ENCODE measurements at regions of chr12 and their contacts with region 1.

Region 1: DNA sequence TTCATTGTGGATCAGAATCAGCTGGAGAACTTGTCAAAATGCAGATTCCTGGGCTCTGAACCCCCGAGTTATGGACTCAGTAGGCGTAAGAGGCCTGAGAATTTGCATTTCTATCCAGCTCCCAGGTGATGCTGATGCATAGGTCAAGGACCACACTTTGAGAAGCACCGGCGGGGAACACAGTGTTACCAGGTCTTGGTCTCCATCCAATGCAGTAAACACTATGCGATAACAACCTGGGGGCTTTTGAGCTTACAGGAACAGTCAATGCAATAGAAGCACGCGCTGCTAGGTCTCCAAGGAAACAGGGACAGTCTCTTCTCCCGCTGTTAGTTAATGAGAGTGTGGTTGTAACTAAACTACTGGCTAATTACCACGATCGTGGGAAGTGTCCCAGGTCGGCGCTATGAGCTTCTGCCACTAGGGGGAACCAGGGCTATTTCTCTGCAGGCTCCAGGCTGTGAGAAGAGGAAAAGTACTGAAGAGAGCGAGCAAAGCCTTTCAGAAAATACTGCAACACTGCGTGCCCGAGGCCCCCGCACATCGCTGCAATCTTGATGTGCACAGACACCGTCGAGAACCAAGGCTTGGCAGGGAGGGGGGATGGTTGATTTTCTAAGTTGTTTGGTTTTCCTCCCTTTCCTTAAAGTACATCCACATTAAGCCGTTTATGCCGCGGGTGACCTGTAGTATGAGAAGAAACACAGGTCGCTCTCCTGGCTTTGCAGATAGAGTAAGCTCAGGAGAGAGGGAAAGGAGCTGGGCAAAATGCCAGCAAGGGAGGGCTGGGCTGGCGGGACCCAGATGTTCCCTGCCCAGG is 52.0 kb upstream of the KCNA1 start:
- DNase-seq: peak; percentile 43
- ATAC-seq: peak; percentile 88
- H3K4me3 ChIP-seq: no peak overlapping the region
- H3K27ac ChIP-seq: no peak overlapping the region
- H3K4me1 ChIP-seq: no peaks in the 10 kb centered on the region
- H3K27me3 ChIP-seq: peaks cover 2% of the 10 kb centered on the region; the same call in 1 of the 2 replicates
- CTCF ChIP-seq: peak; percentile 87

Region 2: DNA sequence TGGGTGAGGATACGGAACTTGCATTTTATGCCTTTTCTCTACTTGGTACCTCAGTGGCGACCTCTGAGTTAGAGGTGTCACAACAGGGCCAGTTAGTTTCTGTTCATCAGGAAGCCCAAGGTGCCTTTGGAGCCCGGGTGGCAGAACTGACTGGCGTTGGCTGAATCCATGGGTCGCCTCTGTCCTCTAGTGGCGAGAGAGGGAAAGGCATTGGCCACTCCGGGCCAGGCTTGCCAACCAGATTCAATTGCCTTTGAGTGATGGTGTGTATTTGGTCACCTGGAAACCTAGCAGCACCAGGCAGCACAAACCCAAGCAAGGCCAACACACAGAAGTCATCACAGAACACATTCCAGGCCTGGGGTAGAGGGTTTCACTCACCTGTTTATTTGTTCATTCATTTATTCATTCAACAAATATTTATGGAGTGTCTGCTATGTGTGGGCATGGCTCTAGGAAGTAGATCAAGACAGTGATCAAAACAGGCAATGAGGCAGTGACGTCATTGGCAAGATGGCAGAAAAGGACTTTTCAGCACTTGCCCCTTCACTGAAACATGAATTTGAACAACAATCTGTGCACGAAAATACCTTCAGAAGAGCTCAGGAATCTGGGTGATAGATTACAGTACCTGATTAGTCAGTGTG is 145.5 kb after region 1 on chr12:
- CTCF ChIA-PET with region 1: interaction called, 7 read pairs
- POLR2A ChIA-PET with region 1: no interaction called
- in situ Hi-C with region 1: no loop called
- intact Hi-C with region 1: loop called (anchors 1 kb)
- DNase-seq: peak; percentile 69
- ATAC-seq: peak; percentile 91
- H3K4me3 ChIP-seq: no peak overlapping the region
- H3K27ac ChIP-seq: no peak overlapping the region
- H3K4me1 ChIP-seq: no peaks in the 10 kb centered on the region
- H3K27me3 ChIP-seq: no peaks in the 10 kb centered on the region
- CTCF ChIP-seq: peak; percentile 93

Region 3: GRCh38 chr12:5018677-5019076 is 161.0 kb after region 1 on chr12:
- CTCF ChIA-PET with region 1: no interaction called
- POLR2A ChIA-PET with region 1: no interaction called
- in situ Hi-C with region 1: no loop called
- intact Hi-C with region 1: no loop called
- DNase-seq: no peak
- ATAC-seq: no peak
- H3K4me3 ChIP-seq: no peak overlapping the region
- H3K27ac ChIP-seq: no peak overlapping the region
- H3K4me1 ChIP-seq: no peaks in the 10 kb centered on the region
- H3K27me3 ChIP-seq: no peaks in the 10 kb centered on the region
- CTCF ChIP-seq: no peak

Region 4: DNA sequence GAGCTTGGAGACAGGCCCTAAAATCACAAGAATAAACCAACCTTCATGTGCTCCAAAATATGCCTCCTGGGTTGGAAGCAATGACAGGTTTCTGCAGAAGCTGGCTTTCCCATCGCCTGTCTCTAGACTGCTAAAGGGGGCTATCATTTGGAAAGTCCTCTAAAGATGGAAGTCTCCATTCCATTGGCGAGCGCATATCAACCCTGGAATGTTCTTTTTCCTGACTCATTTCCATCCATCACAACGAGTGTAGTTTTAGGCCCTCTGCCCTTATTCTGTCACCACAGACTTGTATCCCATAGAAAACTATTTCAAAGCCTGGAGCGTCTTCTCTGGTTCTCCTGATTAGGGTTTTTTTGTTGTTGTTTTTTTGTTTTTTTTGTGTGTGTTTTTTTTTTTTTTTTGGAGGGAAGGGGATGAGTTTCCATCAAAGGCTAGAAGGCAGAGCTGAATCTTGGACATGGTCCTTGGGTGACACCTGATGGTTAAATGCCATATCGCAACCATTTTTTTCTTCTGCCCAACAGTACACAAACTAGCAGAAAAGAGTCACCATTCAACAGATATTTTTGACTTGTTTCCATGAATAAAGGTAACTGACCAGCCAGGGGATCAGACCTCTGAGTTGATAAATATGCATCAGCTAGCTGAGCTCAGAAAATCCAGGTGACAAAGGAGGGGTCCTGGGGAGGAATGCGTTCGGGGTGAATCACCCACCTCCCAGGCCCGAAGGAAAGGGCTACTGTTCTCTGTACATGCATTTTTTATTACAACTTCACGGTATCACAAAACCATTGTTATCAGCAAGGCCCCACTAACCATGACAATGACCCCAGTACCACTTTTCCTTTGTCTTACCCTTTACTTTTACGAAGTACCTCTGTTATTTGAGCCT is 226.5 kb after region 1 on chr12:
- CTCF ChIA-PET with region 1: interaction called, 4 read pairs
- POLR2A ChIA-PET with region 1: no interaction called
- in situ Hi-C with region 1: no loop called
- intact Hi-C with region 1: loop called (anchors 5 kb)
- DNase-seq: peak; percentile 35
- ATAC-seq: no peak
- H3K4me3 ChIP-seq: no peak overlapping the region
- H3K27ac ChIP-seq: no peak overlapping the region
- H3K4me1 ChIP-seq: no peaks in the 10 kb centered on the region
- H3K27me3 ChIP-seq: peaks cover 2% of the 10 kb centered on the region; the same call in 1 of the 2 replicates
- CTCF ChIP-seq: peak; percentile 70

Measured in Panc1 (cell line).